Cardiac septum (tissue), 1 donor: ENCODE measurements at regions of chr7 and their contacts with region 1.

Region 1: GRCh38 chr7:91034459-91035368 is 229.5 kb upstream of the FZD1 start:
- DNase-seq: no peak

Region 2: GRCh38 chr7:90455163-90456030 is 579.3 kb before region 1 on chr7:
- intact Hi-C with region 1: loop called (anchors 10 kb)
- DNase-seq: no peak

Region 3: GRCh38 chr7:90552521-90552920 is 482.2 kb before region 1 on chr7:
- intact Hi-C with region 1: loop called (anchors 5 kb)
- DNase-seq: no peak